ENCODE measurements at regions of chr2 and their contacts with region 1.

Region 1: DNA sequence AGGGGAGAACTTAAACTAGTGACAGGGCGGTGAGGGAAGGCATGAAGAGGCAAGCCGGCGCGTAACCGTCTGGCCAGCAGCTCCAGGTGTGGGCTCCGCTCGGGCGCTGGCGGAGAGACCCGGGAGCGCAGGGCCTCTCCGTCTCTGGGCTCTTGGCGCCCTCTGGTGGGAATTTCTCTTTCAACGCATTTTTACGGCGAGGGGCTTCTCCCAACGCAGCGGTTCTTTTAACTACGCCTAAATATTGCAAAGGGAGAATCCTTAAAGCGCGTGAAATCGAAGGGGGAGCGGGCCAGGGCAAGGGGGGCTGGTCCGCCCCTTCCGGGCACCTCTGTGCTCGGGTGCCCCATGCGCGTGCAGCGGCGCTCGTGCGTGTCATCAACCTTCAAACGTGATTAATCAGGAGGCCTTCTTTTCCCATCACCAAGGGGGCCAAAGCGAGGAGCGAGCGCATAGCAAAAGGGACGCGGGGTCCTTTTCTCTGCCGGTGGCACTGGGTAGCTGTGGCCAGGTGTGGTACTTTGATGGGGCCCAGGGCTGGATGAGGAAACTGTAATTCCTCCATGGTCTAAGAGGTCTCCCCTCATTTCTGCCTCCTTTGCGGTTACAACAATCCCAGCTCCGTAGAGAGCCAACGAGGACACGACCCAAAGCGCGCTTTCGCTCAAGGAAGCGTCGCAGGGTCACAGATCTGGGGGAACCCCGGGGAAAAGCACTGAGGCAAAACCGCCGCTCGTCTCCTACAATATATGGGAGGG is 762 bp upstream of the GAD1 start:
- DNase-seq: peak in 4 of 5 donors; percentile 34 to 74 (median 51)
- ATAC-seq: peak in 3 of 4 donors; percentile 58 to 78 (median 66)
- H3K4me3 ChIP-seq: peak overlapping the region in 11 of 12 donors; percentile 10 to 56 (median 41)
- H3K27ac ChIP-seq: no peak overlapping the region
- H3K4me1 ChIP-seq: peaks cover 13 to 65% (median 45%) of the 10 kb centered on the region in 12 donors
- H3K27me3 ChIP-seq: peaks cover 66 to 94% (median 80%) of the 10 kb centered on the region in 9 donors
- CTCF ChIP-seq: peak; percentile 57 to 79 (median 69)
- POLR2A ChIP-seq: no peak

Region 2: GRCh38 chr2:170324640-170325046 is 491.3 kb before region 1 on chr2:
- intact Hi-C with region 1: loop called in 1 of 10 experiments (anchors 5 kb)
- DNase-seq: no peak
- ATAC-seq: no peak
- H3K4me3 ChIP-seq: no peak overlapping the region
- H3K27ac ChIP-seq: no peak overlapping the region
- H3K4me1 ChIP-seq: no peaks in the 10 kb centered on the region
- H3K27me3 ChIP-seq: peaks cover 0 to 5% (median 0%) of the 10 kb centered on the region in 9 donors
- CTCF ChIP-seq: peak; percentile 29 to 70 (median 48)
- POLR2A ChIP-seq: no peak

Region 3: GRCh38 chr2:170369894-170370293 is 446.0 kb before region 1 on chr2:
- intact Hi-C with region 1: loop called in 5 of 10 experiments (anchors 2 to 10 kb)
- DNase-seq: no peak
- ATAC-seq: no peak
- H3K4me3 ChIP-seq: no peak overlapping the region
- H3K27ac ChIP-seq: no peak overlapping the region
- H3K4me1 ChIP-seq: no peaks in the 10 kb centered on the region
- H3K27me3 ChIP-seq: peaks cover 0 to 84% (median 25%) of the 10 kb centered on the region in 9 donors
- CTCF ChIP-seq: peak in 9 of 12 donors; percentile 4 to 42 (median 24)
- POLR2A ChIP-seq: no peak

Region 4: DNA sequence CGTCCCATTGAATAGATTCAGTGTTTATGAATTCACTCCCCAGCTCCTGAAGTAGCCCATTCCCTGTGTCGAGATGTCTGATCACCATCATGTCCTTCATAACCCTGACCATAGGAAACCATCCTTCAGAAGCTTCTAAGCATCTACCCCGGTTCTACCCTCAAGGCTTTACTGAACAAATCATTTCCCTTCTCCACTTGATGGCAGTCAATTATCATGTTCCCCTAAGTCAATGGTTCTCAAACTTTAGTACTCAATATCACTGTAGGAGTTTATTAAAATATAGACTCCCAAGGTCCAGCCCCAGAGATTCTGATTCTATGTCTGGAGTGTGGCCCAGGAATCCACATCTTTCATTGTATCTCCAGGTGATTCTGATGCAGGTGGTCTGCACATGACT is 329.2 kb before region 1 on chr2:
- intact Hi-C with region 1: loop called (anchors 1 to 5 kb)
- DNase-seq: no peak
- ATAC-seq: peak in 2 of 4 donors; percentile 48 to 50
- H3K4me3 ChIP-seq: no peak overlapping the region
- H3K27ac ChIP-seq: no peak overlapping the region
- H3K4me1 ChIP-seq: no peaks in the 10 kb centered on the region
- H3K27me3 ChIP-seq: no peaks in the 10 kb centered on the region
- CTCF ChIP-seq: peak in 8 of 12 donors; percentile 23 to 57 (median 42)
- POLR2A ChIP-seq: no peak

Measured in heart left ventricle (tissue), 16 donors.